ENCODE measurements at regions of chr11 and their contacts with region 1.

Region 1: GRCh38 chr11:18280438-18281045 is 14.5 kb downstream of the SAA1 start:
- DNase-seq: no peak
- ATAC-seq: peak; percentile 79
- H3K4me3 Mint-ChIP-seq: peak overlapping the region; percentile 62
- H3K27ac Mint-ChIP-seq: peak overlapping the region; percentile 84
- H3K4me1 Mint-ChIP-seq: peaks cover 41% of the 10 kb centered on the region
- H3K27me3 Mint-ChIP-seq: no peaks in the 10 kb centered on the region
- CTCF ChIP-seq: no peak

Region 2: DNA sequence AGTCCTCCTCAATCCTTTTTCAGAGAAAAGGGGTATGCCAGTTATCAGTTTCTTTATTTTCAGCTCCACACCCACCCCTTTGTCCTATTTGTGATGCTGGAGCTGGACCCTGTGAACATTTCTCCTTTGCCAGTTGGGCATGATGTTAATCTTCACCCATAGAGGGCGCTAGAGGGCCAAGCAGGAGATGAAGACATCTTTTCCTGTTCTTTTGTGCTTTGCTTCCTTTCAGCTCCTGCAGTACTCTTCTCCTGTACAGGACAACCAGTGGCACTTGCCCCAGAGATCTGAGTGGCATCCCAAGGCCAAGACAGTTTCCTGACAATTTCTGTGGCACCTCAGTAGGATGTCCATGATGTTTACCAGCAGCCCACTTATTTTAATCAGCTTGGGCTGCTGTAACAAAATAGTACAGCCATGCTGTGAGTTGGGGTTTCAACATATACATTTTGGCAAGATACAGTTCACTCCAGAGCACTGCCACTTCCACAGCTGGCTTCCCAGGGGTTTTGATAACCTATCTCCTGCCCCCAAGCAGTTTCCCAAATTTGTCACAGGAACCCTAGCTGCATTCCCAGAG is 36.7 kb before region 1 on chr11:
- CTCF ChIA-PET with region 1: interaction called, 17 read pairs
- POLR2A ChIA-PET with region 1: interaction called, 4 read pairs
- intact Hi-C with region 1: loop called (anchors 1 kb)
- DNase-seq: no peak
- ATAC-seq: no peak
- H3K4me3 Mint-ChIP-seq: no peak overlapping the region
- H3K27ac Mint-ChIP-seq: no peak overlapping the region
- H3K4me1 Mint-ChIP-seq: peaks cover 15% of the 10 kb centered on the region
- H3K27me3 Mint-ChIP-seq: peaks cover 16% of the 10 kb centered on the region
- CTCF ChIP-seq: no peak

Region 3: GRCh38 chr11:18310800-18311340 is 30.3 kb after region 1 on chr11:
- CTCF ChIA-PET with region 1: no interaction called
- POLR2A ChIA-PET with region 1: interaction called, 13 read pairs
- intact Hi-C with region 1: loop called (anchors 1 kb)
- DNase-seq: no peak
- ATAC-seq: peak; percentile 83
- H3K4me3 Mint-ChIP-seq: peak overlapping the region; percentile 55
- H3K27ac Mint-ChIP-seq: peak overlapping the region; percentile 76
- H3K4me1 Mint-ChIP-seq: peaks cover 38% of the 10 kb centered on the region
- H3K27me3 Mint-ChIP-seq: no peaks in the 10 kb centered on the region
- CTCF ChIP-seq: no peak